ENCODE measurements at regions of chr14 and their contacts with region 1.

Region 1: GRCh38 chr14:50038398-50039119 is 77.8 kb downstream of the VCPKMT start:
- DNase-seq: peak; percentile 92
- H3K4me3 Mint-ChIP-seq: peak overlapping the region; percentile 16
- H3K27ac Mint-ChIP-seq: peak overlapping the region; percentile 91
- H3K4me1 Mint-ChIP-seq: peaks cover 46% of the 10 kb centered on the region
- H3K27me3 Mint-ChIP-seq: no peaks in the 10 kb centered on the region

Region 2: GRCh38 chr14:49767562-49768300 is 270.8 kb before region 1 on chr14 and contains the start of gene KLHDC2:
- CTCF ChIA-PET with region 1: no interaction called
- intact Hi-C with region 1: loop called (anchors 2 kb)
- DNase-seq: peak; percentile 91
- H3K4me3 Mint-ChIP-seq: peak within 1 kb of the TSS; percentile 94
- H3K27ac Mint-ChIP-seq: peak within 1 kb of the TSS; percentile 99
- H3K4me1 Mint-ChIP-seq: peaks cover 34% of the 10 kb centered on the region
- H3K27me3 Mint-ChIP-seq: no peaks in the 10 kb centered on the region
- total RNA-seq, gene KLHDC2: 24.3 to 25.0 TPM

Region 3: GRCh38 chr14:49892636-49893308 is 145.8 kb before region 1 on chr14 and contains the start of gene ARF6:
- CTCF ChIA-PET with region 1: interaction called, 6 read pairs
- intact Hi-C with region 1: loop called (anchors 1 kb)
- DNase-seq: peak; percentile 98
- H3K4me3 Mint-ChIP-seq: peak within 1 kb of the TSS; percentile 100
- H3K27ac Mint-ChIP-seq: peak within 1 kb of the TSS; percentile 100
- H3K4me1 Mint-ChIP-seq: peaks cover 19% of the 10 kb centered on the region
- H3K27me3 Mint-ChIP-seq: no peaks in the 10 kb centered on the region
- total RNA-seq, gene ARF6: 128 to 129 TPM

Region 4: DNA sequence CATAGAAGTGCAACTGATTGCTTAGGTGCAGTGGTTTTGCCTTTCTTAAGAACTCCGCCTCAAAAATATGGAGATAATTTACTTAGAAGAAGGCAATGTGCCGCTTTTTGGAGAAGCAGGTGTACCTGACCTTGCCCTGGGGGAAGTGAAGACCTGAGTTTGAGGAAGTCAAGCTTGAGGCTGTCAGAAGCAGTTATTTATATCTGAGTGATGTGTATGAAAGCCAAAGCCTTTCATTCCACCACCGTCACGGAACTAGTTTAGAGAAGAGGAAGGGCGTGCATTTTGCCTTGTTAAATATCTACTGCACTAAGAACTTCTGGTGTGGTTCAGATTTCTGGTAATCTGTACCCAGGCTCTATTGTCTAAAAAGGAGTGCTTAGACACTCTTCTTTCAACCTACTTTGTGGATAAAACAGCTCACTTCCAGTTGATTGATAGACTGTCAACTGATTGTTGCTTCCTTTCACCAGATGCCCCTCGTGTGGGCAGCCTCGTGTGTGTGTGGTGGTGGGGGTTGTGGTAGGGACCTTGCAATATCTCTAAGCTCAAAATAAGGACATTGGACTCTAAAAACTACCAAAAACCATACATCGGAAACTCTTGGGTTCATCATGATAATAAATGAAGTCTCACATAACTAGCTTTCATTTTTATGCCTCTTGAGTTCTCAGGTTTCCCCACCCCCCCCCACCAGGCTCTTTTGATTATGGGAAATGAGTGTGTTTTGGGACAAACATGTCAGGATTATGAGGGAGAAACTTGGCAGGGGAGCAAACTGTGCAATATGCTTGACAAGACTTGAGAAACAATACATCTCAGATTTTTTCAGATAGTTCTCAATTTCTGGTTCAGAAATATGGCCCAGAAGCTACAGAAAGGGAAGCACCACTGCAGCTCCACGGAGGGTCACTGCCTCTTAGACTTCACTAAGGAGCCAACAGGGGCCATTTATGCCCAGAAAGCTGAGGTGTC is 67.1 kb before region 1 on chr14:
- CTCF ChIA-PET with region 1: interaction called, 9 read pairs
- intact Hi-C with region 1: loop called (anchors 1 kb)
- DNase-seq: peak; percentile 69
- H3K4me3 Mint-ChIP-seq: peak overlapping the region; percentile 73
- H3K27ac Mint-ChIP-seq: peak overlapping the region; percentile 97
- H3K4me1 Mint-ChIP-seq: peaks cover 59% of the 10 kb centered on the region
- H3K27me3 Mint-ChIP-seq: no peaks in the 10 kb centered on the region

Region 5: GRCh38 chr14:50013559-50014333 is 24.8 kb before region 1 on chr14:
- CTCF ChIA-PET with region 1: interaction called, 3 read pairs
- intact Hi-C with region 1: loop called (anchors 1 kb)
- DNase-seq: no peak
- H3K4me3 Mint-ChIP-seq: no peak overlapping the region
- H3K27ac Mint-ChIP-seq: no peak overlapping the region
- H3K4me1 Mint-ChIP-seq: peaks cover 31% of the 10 kb centered on the region
- H3K27me3 Mint-ChIP-seq: no peaks in the 10 kb centered on the region

Region 6: DNA sequence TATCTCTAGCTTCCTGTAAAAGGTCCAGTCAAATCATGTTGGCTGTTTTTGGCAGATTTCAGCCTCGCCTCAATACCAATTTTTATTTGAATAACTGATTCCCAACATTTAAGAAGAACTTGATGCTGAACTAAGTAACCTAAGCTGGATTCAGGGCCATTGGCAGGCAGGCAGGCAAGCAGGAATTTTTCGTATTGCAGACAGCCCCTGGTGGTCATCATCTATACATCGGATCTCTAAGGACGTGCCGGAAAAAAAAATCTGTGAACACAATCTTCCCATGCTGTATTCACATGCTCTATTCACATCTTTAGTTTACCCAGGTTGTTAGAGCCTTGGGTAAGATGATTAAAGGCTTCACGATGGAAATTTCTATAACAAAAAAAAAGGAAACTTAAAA is 70.8 kb after region 1 on chr14:
- CTCF ChIA-PET with region 1: interaction called, 5 read pairs
- intact Hi-C with region 1: loop called (anchors 1 kb)
- DNase-seq: no peak
- H3K4me3 Mint-ChIP-seq: no peak overlapping the region
- H3K27ac Mint-ChIP-seq: peak overlapping the region; percentile 59
- H3K4me1 Mint-ChIP-seq: peaks cover 43% of the 10 kb centered on the region
- H3K27me3 Mint-ChIP-seq: no peaks in the 10 kb centered on the region

Region 7: DNA sequence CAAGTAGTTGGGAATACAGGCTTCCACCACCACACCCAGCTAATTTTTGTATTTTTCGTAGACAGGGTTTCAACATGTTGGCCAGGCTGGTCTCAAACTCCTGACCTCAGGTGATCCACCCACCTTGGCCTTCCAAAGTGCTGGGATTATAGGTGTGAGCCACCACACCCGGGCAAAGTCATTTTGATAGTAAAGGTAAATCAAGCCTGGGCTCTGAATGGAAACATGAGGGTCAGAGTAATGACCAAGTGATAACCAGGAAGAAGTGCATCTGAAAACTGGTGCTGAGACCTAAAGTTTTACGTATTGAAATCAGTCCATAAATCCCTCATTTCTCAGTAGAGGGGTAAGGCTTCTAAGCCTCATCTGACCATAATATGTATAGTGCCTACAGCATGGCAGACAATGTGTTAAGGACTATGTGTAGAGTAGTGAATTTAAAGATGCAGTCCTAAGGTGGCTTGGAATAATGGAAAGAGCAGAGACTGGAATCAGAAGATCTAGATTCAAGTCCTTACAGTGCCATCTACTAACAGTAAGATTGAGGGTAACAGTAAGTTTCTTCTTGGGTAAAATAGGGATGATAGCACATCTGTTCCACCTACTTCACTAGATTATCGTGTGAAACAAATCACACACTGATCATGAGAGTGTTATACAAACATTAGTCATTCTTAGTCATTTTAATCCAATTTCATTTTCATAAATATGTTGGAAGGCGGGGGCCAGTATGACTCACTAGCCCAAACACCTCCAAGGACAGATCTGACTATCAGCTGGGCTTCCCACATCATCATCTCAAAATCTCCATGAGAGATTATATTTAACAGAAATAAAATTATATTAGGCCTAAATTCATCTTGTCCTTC is 482.6 kb after region 1 on chr14:
- CTCF ChIA-PET with region 1: no interaction called
- intact Hi-C with region 1: loop called (anchors 1 kb)
- DNase-seq: peak; percentile 87
- H3K4me3 Mint-ChIP-seq: no peak overlapping the region
- H3K27ac Mint-ChIP-seq: peak overlapping the region; percentile 89
- H3K4me1 Mint-ChIP-seq: peaks cover 53% of the 10 kb centered on the region
- H3K27me3 Mint-ChIP-seq: no peaks in the 10 kb centered on the region